ENCODE measurements at regions of chr13 and their contacts with region 1.

Region 1: GRCh38 chr13:45055198-45055901 is 65.0 kb upstream of the GTF2F2 start:
- DNase-seq: peak in 6 of 10 donors; percentile 20 to 62 (median 50)
- H3K4me3 ChIP-seq: peak overlapping the region in 11 of 59 donors; percentile 11 to 40 (median 22)
- H3K27ac ChIP-seq: peak overlapping the region in 55 of 59 donors; percentile 31 to 94 (median 82)
- H3K27me3 ChIP-seq: no peaks in the 10 kb centered on the region
- CTCF ChIP-seq: no peak

Region 2: DNA sequence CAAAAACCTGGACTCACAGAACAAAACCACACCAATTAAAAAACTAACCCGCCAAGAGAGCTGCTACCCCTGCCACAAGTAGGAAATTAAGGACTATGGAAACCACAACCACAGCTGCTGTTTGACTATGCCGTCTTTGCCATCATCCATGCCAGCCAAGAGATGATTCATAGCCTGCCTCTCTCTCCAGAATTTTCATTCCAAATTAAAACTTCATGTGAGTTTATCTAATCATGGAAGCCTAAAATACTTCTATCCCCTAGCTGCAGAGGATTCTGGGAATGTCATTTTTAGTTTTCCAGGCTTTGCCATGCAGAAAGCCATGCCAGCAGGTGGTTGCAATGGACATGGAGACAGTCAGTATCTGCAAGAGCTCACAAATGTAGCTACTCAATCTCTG is 37.3 kb after region 1 on chr13:
- intact Hi-C with region 1: loop called in 1 of 2 experiments (anchors 1 kb)
- DNase-seq: peak in 2 of 10 donors; percentile 36 to 41
- H3K4me3 ChIP-seq: no peak overlapping the region
- H3K27ac ChIP-seq: peak overlapping the region in 3 of 59 donors; percentile 6 to 20 (median 17)
- H3K27me3 ChIP-seq: no peaks in the 10 kb centered on the region
- CTCF ChIP-seq: no peak

Region 3: GRCh38 chr13:45102136-45102507 is 46.8 kb after region 1 on chr13:
- intact Hi-C with region 1: loop called in 1 of 2 experiments (anchors 2 kb)
- DNase-seq: peak in 4 of 10 donors; percentile 48 to 63 (median 54)
- H3K4me3 ChIP-seq: peak overlapping the region in 21 of 59 donors; percentile 4 to 44 (median 23)
- H3K27ac ChIP-seq: peak overlapping the region; percentile 59 to 99 (median 92)
- H3K27me3 ChIP-seq: no peaks in the 10 kb centered on the region
- CTCF ChIP-seq: peak in 6 of 56 donors; percentile 7 to 34 (median 24)